HEK293T (cell line): ENCODE measurements at regions of chr3 and their contacts with region 1.

Region 1: DNA sequence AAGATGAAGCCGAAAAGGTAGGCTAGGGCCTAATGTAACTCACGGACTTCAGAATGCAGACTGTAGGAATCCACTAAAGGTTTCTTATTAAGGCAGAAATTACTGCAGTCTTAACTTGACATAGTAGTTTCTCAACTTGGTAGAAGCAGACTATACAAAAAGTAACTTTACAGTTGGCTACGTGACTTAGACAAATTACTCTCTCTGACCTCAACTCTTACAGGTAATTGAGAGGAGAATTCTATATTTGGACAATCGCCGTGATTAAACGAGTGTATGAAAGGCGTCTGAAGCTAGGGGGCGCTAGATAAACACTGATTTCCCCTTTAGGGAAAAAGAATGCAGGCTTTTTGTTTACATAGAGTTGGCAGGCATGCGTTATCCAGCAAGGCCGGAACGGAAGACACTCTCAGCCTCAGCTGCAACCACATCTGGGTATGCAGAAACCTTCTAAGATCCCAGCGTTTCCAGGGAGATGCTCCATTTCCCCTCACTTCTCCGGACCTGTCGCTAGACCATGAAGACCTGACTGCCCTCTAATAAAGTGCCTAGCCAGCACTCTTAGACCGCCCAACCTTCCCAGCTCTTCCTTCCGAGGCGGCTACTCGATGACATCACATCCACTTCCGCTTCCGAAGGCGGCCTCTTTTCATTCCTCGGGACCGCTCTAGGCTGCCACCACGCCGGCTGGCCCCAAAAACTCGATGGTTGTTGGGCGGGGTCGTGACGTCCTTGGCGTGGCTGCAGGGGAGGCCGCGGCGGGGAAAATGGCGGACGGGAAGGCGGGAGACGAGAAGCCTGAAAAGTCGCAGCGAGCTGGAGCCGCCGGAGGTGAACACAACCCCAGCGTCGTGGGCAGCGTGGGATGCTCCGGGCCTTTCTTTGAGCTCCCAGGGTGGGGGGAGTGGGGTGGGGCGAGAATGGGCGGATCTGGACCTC is at the start of gene PCNP:
- DNase-seq: peak; percentile 93

Region 2: GRCh38 chr3:101561630-101562328 is 11.9 kb before region 1 on chr3 and contains the start of gene TRMT10C:
- CTCF ChIA-PET with region 1: interaction called, 5 read pairs
- POLR2A ChIA-PET with region 1: interaction called, 18 read pairs
- DNase-seq: peak; percentile 94

Region 3: GRCh38 chr3:101676765-101677435 is 103.2 kb after region 1 on chr3 and contains the start of gene ZBTB11:
- CTCF ChIA-PET with region 1: no interaction called
- POLR2A ChIA-PET with region 1: interaction called, 23 read pairs
- DNase-seq: peak; percentile 94